Left colon (tissue), 2 donors: ENCODE measurements at regions of chr6 and their contacts with region 1.

Region 1: GRCh38 chr6:151765444-151765886 is 42.0 kb upstream of the ESR1 start:
- DNase-seq: peak in 1 of 2 donors; percentile 22
- ATAC-seq: peak; percentile 66

Region 2: DNA sequence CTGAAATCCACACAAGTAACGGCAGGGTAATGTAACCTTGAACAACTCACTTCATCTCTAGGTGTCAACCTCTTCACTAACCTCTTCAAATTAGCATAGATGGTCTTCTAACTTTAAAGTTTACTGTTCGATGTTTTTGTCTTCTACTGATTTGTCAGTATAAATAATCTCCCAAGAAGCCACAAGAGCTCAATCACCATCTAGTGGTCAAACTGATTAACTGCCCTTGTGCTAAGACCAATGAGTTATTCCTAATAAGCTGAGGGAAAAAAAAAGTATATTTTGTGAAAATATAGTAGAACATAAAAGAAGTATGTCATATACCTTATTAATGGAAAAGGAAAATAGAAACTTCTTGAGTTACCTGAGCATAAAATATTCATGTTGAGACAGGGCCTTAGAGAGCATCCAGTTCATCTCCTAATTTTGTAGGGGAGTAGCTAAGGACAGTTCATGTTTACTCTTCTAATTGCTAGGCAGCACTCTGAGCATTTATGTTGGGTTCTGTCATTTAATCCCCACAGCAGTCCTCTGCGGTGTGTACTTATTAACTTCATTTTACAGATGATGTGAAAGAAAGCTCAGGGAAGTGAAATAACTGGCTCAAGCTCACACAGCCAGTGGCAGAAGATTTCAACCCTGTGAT is 359.1 kb after region 1 on chr6:
- intact Hi-C with region 1: loop called in 1 of 2 experiments (anchors 10 kb)
- DNase-seq: no peak
- ATAC-seq: no peak

Region 3: DNA sequence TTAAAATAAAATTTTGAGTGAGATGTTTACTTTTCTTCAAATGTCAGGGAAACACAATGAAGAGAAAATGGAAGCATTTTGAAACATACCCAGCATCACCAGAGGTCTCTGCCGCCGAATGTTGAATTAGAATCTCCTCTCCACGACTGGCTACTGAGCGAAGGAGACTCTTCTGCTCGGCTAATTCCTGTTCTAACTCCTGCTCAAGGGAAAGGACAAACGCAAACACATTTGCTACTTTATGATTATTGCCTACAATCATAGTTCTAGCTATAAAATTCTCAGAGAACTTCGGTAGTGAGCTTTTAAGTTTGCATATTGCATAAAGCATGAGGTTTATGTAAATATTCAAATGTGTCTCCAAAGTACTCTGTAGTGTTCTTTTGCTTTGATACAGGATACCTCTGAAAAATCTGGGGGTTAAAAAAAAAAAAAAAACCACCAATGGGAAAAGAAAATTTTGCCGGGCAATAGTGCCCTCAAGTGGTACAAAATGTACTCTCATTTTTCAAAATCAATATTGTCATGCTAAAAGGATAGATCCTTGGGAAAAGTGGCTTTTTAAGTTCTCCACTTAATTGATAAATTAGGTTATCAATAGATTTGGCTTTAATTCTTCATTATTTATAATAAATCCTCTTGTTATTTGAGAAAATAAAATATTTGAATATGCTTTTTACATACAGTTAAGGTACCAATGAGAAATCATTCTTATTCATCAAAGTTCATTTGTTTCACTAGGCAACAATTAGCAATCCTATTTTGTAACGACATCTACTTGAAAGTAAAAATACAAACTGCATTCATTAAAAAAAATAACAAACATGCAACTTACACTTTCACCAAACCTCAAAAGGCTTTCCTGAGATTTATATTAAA is 502.7 kb after region 1 on chr6:
- intact Hi-C with region 1: loop called in 1 of 2 experiments (anchors 10 kb)
- DNase-seq: no peak
- ATAC-seq: peak; percentile 95